Calu3 (cell line): ENCODE measurements at regions of chr6 and their contacts with region 1.

Region 1: GRCh38 chr6:47710295-47710694 is 11.9 kb downstream of the ADGRF4 start:
- DNase-seq: no peak
- H3K4me3 Mint-ChIP-seq: no peak overlapping the region
- H3K27ac Mint-ChIP-seq: no peak overlapping the region
- H3K4me1 Mint-ChIP-seq: peaks cover 10% of the 10 kb centered on the region
- H3K27me3 Mint-ChIP-seq: no peaks in the 10 kb centered on the region
- CTCF ChIP-seq: no peak

Region 2: GRCh38 chr6:47749757-47750156 is 39.5 kb after region 1 on chr6:
- CTCF ChIA-PET with region 1: no interaction called
- intact Hi-C with region 1: loop called (anchors 1 kb)
- DNase-seq: no peak
- H3K4me3 Mint-ChIP-seq: no peak overlapping the region
- H3K27ac Mint-ChIP-seq: no peak overlapping the region
- H3K4me1 Mint-ChIP-seq: peaks cover 8% of the 10 kb centered on the region
- H3K27me3 Mint-ChIP-seq: no peaks in the 10 kb centered on the region
- CTCF ChIP-seq: no peak